PC-9 (cell line): ENCODE measurements at regions of chr7 and their contacts with region 1.

Region 1: DNA sequence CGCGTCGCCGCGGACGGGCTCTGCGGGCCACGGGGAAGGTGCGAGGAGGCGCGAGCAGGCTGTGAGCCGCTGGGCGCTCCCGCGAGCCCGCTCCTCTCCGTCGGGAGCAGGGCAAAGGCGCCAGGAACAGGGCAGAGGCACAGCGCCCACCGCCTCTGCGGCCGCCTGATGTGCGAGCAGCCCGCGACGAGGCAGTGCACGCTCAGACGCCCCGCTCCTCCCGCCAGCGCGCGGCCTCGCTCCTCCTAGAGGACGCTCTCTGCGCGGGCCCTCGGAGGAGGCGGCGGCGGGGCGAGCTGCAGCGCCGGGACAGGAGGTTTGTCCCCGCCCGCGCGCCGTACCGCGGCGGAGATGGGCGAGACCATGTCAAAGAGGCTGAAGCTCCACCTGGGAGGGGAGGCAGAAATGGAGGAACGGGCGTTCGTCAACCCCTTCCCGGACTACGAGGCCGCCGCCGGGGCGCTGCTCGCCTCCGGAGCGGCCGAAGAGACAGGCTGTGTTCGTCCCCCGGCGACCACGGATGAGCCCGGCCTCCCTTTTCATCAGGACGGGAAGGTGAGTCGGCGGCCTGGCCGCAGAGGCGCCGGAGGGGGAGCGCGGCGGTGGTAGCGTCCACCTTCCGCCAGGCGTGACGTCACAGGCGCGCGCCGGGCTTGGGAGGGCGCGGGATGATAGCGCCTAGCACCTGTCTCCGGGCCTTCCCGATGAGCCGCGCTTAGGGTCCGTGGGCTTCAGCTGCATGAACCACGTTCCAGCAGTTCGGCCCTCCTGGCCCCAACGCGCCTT is 731 bp downstream of the LANCL2 start:
- DNase-seq: peak; percentile 95 to 99
- H3K4me3 ChIP-seq: peak overlapping the region; percentile 78
- H3K27ac ChIP-seq: peak overlapping the region; percentile 89
- H3K4me1 ChIP-seq: peaks cover 23% of the 10 kb centered on the region
- H3K27me3 ChIP-seq: peaks cover 7% of the 10 kb centered on the region; the same call in 1 of the 2 replicates
- CTCF ChIP-seq: peak; percentile 52; the same call in 1 of the 2 replicates

Region 2: DNA sequence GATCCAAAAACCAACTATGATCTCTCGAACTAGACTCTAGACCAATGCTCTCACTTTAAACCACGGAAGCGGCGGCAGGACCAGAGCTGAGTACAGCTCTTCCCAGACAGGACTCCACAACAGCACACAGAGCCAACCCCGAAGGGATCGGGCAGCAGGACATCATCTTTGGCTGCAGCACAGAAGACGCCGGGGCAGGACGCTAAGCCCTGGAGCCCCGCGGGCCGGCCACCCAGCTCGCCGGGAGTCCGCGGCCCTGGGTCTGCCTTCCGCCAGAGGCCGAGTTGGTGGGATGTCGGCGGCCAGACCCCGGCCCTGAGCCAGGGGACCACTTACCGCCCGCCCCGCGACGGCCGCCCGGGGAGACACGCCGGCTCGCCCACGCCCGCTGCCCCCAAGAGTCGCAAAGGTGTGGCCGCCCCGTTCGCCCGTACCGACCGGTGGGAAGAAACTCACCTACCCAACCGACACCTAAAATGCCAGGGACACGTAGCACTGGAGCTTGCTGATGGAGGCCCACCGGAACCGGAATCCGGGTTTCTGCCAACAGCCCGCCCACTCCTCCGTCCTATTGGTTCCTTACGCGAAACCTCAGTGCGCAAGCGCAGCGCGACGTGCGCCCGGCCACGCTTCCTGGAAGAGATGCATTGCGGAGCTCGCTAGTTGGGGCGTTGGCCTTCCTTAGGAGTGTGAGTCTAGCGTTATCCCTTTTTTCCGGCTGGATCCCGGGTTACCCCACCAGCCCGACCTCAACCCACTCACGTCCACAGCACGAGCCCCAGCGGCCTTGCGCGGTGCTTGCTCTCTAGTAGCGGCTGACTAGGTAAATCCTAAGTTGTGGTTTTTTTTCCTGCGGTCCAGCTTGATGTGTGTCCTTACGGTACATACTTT is 606.9 kb before region 1 on chr7 and contains the start of gene SEC61G:
- CTCF ChIA-PET with region 1: no interaction called
- POLR2A ChIA-PET with region 1: no interaction called
- intact Hi-C with region 1: loop called (anchors 5 kb)
- DNase-seq: peak; percentile 99
- H3K4me3 ChIP-seq: peak within 1 kb of the TSS; percentile 77
- H3K27ac ChIP-seq: peak within 1 kb of the TSS; percentile 77
- H3K4me1 ChIP-seq: peaks cover 20% of the 10 kb centered on the region
- H3K27me3 ChIP-seq: no peaks in the 10 kb centered on the region
- CTCF ChIP-seq: no peak
- total RNA-seq, gene SEC61G: 203 and 261 TPM in 2 replicates

Region 3: GRCh38 chr7:55120481-55121198 is 245.2 kb before region 1 on chr7:
- CTCF ChIA-PET with region 1: no interaction called
- POLR2A ChIA-PET with region 1: no interaction called
- intact Hi-C with region 1: no loop called
- DNase-seq: peak; percentile 71 to 98
- H3K4me3 ChIP-seq: peak overlapping the region; percentile 3; the same call in 1 of the 2 replicates
- H3K27ac ChIP-seq: peak overlapping the region; percentile 79
- H3K4me1 ChIP-seq: peaks cover 77% of the 10 kb centered on the region
- H3K27me3 ChIP-seq: no peaks in the 10 kb centered on the region
- CTCF ChIP-seq: no peak

Region 4: DNA sequence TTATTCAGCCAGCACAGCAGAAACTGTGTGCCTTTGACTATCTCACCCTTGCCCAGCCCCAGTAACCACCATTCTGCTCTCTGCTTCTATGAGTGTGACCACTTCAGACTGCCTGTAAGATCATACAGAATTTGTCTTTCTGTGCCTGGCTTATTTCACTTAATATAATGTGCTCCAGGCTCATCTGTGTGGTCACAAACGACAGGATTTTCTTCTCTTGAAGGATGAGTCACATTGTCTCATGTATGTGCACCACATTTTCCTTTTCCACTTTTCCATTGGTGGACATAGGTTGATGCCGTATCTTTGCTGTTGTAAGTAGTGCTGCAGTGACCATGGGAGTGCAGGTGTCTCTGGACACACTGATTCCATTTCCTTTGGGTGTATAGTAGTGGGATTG is 123.3 kb before region 1 on chr7:
- CTCF ChIA-PET with region 1: no interaction called
- POLR2A ChIA-PET with region 1: no interaction called
- intact Hi-C with region 1: no loop called
- DNase-seq: no peak
- H3K4me3 ChIP-seq: no peak overlapping the region
- H3K27ac ChIP-seq: no peak overlapping the region
- H3K4me1 ChIP-seq: peaks cover 12% of the 10 kb centered on the region
- H3K27me3 ChIP-seq: peaks cover 25% of the 10 kb centered on the region
- CTCF ChIP-seq: no peak

Region 5: DNA sequence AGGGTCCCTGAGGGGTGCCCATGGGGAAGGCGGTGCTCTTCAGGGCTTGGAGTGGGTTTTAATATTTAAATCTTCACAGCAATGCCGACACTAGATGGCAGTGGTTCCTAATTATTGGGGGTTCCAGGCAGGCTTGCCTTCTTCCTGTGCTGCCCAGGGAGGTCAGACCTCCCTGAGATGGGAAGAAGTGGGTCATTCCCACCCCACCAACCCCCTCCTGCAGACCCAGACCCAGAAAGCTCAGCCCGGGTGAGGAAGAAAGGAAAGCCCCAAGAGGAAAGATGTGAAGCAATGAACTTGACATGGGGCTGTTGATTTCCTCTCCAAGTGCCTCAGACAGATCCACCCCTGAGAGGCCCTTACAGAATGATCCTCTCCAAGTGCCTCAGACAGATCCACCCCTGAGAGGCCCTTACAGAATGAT is 85.8 kb before region 1 on chr7:
- CTCF ChIA-PET with region 1: interaction called, 4 read pairs
- POLR2A ChIA-PET with region 1: no interaction called
- intact Hi-C with region 1: loop called (anchors 1 kb)
- DNase-seq: peak; percentile 72 to 74
- H3K4me3 ChIP-seq: no peak overlapping the region
- H3K27ac ChIP-seq: no peak overlapping the region
- H3K4me1 ChIP-seq: no peaks in the 10 kb centered on the region
- H3K27me3 ChIP-seq: peaks cover 54% of the 10 kb centered on the region
- CTCF ChIP-seq: peak; percentile 99

Region 6: GRCh38 chr7:55415173-55415778 is 49.4 kb after region 1 on chr7:
- CTCF ChIA-PET with region 1: no interaction called
- POLR2A ChIA-PET with region 1: no interaction called
- intact Hi-C with region 1: loop called (anchors 2 kb)
- DNase-seq: peak; percentile 75 to 82
- H3K4me3 ChIP-seq: no peak overlapping the region
- H3K27ac ChIP-seq: no peak overlapping the region
- H3K4me1 ChIP-seq: no peaks in the 10 kb centered on the region
- H3K27me3 ChIP-seq: no peaks in the 10 kb centered on the region
- CTCF ChIP-seq: peak; percentile 100

Region 7: GRCh38 chr7:55951637-55952351 is 585.9 kb after region 1 on chr7 and contains the start of gene MRPS17:
- CTCF ChIA-PET with region 1: no interaction called
- POLR2A ChIA-PET with region 1: no interaction called
- intact Hi-C with region 1: loop called (anchors 2 kb)
- DNase-seq: peak; percentile 95 to 99
- H3K4me3 ChIP-seq: peak within 1 kb of the TSS; percentile 71
- H3K27ac ChIP-seq: peak within 1 kb of the TSS; percentile 52
- H3K4me1 ChIP-seq: peaks cover 7% of the 10 kb centered on the region
- H3K27me3 ChIP-seq: peaks cover 22% of the 10 kb centered on the region
- CTCF ChIP-seq: no peak
- total RNA-seq, gene MRPS17: 38.2 and 39.6 TPM in 2 replicates

Region 8: DNA sequence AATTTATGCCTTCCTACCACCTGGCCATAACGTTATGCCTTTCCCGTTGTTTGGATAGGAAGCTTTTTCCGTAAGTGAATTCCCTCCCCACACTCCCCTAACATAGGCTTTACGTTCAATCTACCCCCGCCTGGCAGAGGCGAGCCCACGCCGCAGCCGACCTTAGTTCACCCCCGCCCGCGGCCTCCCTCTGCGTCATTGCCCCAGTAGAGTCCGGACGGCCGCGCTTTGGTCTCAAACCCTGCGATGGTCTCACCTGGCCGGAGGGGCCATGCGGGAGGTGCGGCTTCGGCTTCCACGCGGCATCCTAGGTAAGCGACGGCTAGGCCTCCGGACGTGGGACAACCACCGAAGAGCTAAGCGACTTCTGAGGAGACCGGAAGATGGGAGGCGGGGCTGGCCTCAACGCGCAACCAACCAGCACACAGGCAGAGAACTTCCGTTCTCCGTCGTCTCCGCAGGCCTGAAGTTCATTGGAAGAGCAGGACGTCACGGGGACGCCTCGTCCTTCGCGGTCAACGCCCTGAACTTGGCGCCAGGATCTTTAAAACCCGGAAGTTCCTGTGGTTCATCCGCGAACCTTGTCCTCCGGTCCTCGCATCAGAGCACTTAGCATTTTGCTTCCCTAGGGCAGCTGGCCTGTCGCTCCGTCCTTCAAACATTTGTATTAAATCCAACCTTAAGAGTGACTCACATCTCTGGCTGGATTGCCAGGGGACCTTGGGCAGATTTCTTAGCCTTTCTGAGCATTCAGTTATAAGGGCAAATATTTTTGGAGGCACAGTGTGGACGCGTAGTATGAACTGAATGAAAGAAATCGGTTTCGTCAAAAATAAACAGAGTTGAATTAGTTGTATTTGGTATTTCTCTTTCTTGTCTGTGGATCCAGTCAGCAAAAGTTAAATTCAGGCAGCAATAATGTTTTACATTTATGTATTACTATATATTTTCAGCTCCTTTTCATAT is 740.5 kb after region 1 on chr7 and contains the start of gene CHCHD2:
- CTCF ChIA-PET with region 1: no interaction called
- POLR2A ChIA-PET with region 1: no interaction called
- intact Hi-C with region 1: loop called (anchors 1 kb)
- DNase-seq: peak; percentile 99 to 100
- H3K4me3 ChIP-seq: peak within 1 kb of the TSS; percentile 74
- H3K27ac ChIP-seq: peak within 1 kb of the TSS; percentile 73
- H3K4me1 ChIP-seq: peaks cover 25% of the 10 kb centered on the region
- H3K27me3 ChIP-seq: no peaks in the 10 kb centered on the region
- CTCF ChIP-seq: no peak
- total RNA-seq, gene CHCHD2: 978 and 1,041 TPM in 2 replicates